ENCODE measurements at regions of chr2 and their contacts with region 1.

Region 1: GRCh38 chr2:197310271-197310985 is at the start of gene ANKRD44:
- DNase-seq: peak; percentile 87
- H3K4me3 Mint-ChIP-seq: peak within 1 kb of the TSS; percentile 91
- H3K27ac Mint-ChIP-seq: peak within 1 kb of the TSS; percentile 98
- H3K4me1 Mint-ChIP-seq: peaks cover 68% of the 10 kb centered on the region
- H3K27me3 Mint-ChIP-seq: no peaks in the 10 kb centered on the region
- total RNA-seq, gene ANKRD44: 153 and 159 TPM in 2 replicates

Region 2: DNA sequence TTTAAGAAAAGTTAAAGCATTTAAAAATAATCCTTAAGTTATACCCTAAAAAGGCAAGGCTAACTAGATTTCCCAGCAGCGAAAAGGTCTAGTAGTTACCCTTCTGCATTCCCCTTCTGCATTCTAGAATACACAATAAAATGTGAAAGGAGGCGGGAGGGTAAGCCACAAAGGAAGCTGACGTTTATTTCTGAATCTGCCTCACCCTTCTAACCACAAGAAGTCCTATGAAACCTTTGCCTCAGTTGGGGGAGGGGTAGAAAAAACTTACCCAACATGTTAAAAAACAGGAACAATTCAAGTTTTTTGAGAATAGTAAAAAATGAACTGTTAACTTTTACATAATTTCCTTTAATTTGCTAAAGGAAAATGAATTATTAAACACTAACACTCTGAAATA is 1150.3 kb before region 1 on chr2:
- intact Hi-C with region 1: loop called (anchors 10 kb)
- DNase-seq: peak; percentile 74
- H3K4me3 Mint-ChIP-seq: peak overlapping the region; percentile 76
- H3K27ac Mint-ChIP-seq: peak overlapping the region; percentile 93
- H3K4me1 Mint-ChIP-seq: peaks cover 91% of the 10 kb centered on the region
- H3K27me3 Mint-ChIP-seq: no peaks in the 10 kb centered on the region

Region 3: DNA sequence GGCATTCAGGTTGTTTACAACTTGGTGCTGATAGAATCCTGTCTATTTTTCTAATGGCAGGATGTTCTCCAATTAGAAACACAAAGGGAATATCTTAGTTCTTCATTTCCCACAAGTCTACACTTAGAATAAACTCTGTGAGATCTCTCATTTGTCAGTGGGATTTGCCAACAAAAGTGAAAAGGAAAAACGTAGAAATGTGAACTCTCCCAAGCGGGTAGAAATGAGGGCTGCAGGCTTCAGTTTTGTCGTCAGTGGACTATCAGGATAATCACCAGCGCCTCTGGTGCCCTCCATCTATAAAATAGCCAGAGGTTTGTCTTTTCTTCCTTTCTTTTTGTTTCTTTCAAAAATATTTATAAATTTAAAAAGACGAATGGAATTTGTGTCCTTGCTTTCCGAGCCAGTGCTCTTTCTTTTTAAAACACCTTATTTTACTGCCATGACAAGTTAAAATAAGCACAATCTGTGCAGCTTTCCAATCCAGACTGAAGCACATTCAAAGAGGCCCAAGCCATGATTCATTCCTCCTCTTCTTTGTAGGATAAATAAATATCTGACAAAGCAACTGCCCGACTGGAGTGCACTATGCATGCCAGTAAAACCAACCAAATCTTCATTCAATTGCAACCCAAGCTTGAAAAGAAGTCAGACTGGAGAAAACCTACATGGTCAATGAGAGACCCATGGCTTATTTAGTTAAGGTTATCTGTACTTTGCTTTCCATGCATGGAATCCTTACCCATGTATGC is 185.6 kb before region 1 on chr2:
- intact Hi-C with region 1: loop called (anchors 5 kb)
- DNase-seq: no peak
- H3K4me3 Mint-ChIP-seq: no peak overlapping the region
- H3K27ac Mint-ChIP-seq: no peak overlapping the region
- H3K4me1 Mint-ChIP-seq: peaks cover 46% of the 10 kb centered on the region
- H3K27me3 Mint-ChIP-seq: no peaks in the 10 kb centered on the region

Region 4: GRCh38 chr2:197209742-197210408 is 100.6 kb before region 1 on chr2:
- intact Hi-C with region 1: loop called (anchors 1 kb)
- DNase-seq: peak; percentile 53
- H3K4me3 Mint-ChIP-seq: peak overlapping the region; percentile 69
- H3K27ac Mint-ChIP-seq: peak overlapping the region; percentile 97
- H3K4me1 Mint-ChIP-seq: peaks cover 95% of the 10 kb centered on the region
- H3K27me3 Mint-ChIP-seq: no peaks in the 10 kb centered on the region

Region 5: DNA sequence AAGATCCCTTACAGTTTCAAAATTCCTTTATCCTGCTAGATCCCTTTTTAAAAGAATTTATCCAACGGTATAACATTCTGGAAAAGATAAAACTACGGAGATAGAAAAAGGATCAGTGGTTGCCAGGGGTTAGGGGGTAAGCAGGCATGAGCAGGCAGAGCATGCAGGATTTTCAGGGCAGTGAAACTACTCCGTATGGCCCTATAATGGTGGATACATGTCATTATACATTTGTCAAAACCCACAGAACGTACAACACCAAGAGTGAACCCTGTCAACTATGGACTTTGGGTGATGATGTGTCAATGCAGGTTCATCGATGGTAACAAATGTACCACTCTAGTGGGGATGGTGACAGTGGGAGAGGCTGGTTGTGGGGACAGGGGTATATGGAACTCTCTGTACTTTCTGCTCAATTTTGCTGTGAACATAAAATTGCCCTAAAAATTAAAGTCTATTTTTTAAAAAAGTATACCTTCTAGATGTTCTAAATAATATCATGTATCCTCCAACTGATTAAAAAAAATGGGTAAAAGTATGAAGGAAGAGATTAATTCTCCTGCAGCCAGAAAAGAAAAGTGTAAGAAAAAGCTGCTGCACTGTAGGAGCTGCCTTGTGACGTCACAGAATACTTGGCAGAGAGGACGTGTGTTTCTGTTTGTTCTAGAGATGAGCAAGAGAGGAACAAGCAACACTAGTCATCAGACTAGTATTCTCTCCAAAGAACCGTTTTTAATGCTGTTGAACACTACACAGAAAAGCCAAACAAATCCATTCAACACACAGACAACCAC is 23.4 kb before region 1 on chr2:
- intact Hi-C with region 1: loop called (anchors 1 kb)
- DNase-seq: peak; percentile 49
- H3K4me3 Mint-ChIP-seq: peak overlapping the region; percentile 76
- H3K27ac Mint-ChIP-seq: peak overlapping the region; percentile 100
- H3K4me1 Mint-ChIP-seq: peaks cover 78% of the 10 kb centered on the region
- H3K27me3 Mint-ChIP-seq: no peaks in the 10 kb centered on the region

Region 6: GRCh38 chr2:197345846-197346370 is 35.5 kb after region 1 on chr2:
- intact Hi-C with region 1: no loop called
- DNase-seq: no peak
- H3K4me3 Mint-ChIP-seq: no peak overlapping the region
- H3K27ac Mint-ChIP-seq: no peak overlapping the region
- H3K4me1 Mint-ChIP-seq: peaks cover 6% of the 10 kb centered on the region
- H3K27me3 Mint-ChIP-seq: no peaks in the 10 kb centered on the region

Region 7: DNA sequence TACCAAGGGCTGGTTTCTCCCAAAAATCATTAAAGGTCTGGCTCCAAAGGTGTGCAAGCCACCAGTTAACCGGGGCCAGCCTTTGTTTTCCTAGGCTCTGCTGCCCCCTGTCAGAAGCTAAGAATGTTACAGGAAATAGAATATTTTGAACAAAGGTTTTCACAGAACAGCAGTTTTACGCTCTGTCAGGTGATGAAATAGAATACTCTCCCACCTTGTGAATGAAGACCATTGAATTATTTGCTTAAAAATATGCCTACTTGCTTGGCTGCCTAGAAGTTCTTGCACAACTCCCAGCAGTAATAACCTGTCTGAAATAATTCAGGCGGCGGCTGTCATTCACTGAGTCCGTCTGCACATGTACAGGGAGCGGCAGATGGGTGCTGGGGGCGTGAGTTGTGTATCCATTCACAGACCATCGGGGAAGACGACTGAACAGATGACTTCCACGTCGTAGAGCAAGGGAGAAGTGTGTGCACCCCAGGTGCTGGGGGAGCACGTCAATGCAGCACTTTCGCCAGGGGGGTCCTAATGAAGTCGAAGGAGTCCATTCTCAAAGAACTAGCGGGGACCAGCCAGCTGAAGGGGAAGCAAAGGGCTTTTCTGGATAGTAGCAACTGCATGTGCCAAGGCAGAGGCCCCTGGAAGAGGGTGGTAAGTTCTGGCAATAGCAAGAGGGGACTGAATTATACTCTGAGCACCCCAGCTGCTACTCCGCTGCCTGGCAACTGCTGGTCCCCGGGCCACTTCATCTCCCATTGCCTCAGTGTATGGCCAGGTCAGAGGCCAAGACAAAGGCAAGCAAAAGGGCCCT is 68.3 kb after region 1 on chr2:
- intact Hi-C with region 1: loop called (anchors 1 kb)
- DNase-seq: peak; percentile 40
- H3K4me3 Mint-ChIP-seq: no peak overlapping the region
- H3K27ac Mint-ChIP-seq: peak overlapping the region; percentile 11
- H3K4me1 Mint-ChIP-seq: peaks cover 24% of the 10 kb centered on the region
- H3K27me3 Mint-ChIP-seq: peaks cover 10% of the 10 kb centered on the region

Measured in activated T-helper 1 cell treated with anti-CD3 and anti-CD28 coated beads, Interleukin-12 subunit alpha, Interleukin-12 subunit beta, Interleukin-2, Interleukin-4 antibody, amounts not matched to agents 30 ng/mL and 10 ng/mL and 1 ng/mL, durations not matched to agents 14 hours and 24 hours and 36 hours (primary cell).